Gastrocnemius medialis (tissue), 4 donors: ENCODE measurements at regions of chr6 and their contacts with region 1.

Region 1: GRCh38 chr6:24283043-24283985 is 74.5 kb downstream of the DCDC2 start:
- DNase-seq: peak; percentile 23 to 47
- ATAC-seq: peak; percentile 86 to 93
- H3K4me3 ChIP-seq: peak overlapping the region in 3 of 4 donors; percentile 12 to 33 (median 22)
- H3K27ac ChIP-seq: no peak overlapping the region
- H3K4me1 ChIP-seq: peaks cover 0 to 6% of the 10 kb centered on the region in 2 donors
- H3K27me3 ChIP-seq: no peaks in the 10 kb centered on the region
- CTCF ChIP-seq: peak in 4 of 5 experiments; percentile 35 to 64 (median 52)
- POLR2A ChIP-seq: no peak

Region 2: DNA sequence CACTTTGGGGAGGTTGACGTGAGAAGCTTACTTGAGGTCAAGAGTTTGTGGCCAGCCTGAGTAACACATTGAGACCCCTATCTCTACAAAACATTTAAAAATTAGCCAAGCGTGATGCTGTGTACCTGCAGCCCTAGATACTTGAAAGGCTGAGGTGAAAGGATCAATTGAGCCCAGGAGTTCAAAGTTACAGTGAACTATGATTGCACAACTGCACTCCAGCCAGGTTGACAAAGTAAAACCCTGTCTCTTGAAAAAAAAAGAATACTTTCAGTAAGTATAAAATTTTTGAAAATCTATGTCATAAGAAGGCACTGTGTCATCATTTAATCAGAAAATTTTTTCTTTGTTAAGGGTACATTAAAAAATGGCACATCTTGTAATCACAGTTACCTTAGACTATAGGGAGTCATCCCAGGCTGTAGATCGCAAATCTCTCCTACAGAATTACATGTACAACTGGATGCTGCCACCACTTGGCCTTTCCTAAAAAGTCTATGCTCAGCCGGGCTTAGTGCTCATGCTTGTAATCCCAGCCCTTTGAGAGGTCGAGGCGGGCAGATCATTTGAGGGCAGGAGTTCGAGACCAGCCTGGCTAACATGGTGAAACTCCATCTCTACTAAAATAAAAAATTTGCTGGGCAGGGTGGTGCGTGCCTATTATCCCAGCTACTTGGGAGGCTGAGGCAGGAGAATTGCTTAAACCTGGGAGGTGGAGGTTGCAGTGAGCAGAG is 102.4 kb after region 1 on chr6:
- in situ Hi-C with region 1: loop called (anchors 5 to 25 kb)
- intact Hi-C with region 1: loop called (anchors 1 kb)
- DNase-seq: no peak
- ATAC-seq: no peak
- H3K4me3 ChIP-seq: no peak overlapping the region
- H3K27ac ChIP-seq: no peak overlapping the region
- H3K4me1 ChIP-seq: no peaks in the 10 kb centered on the region
- H3K27me3 ChIP-seq: no peaks in the 10 kb centered on the region
- CTCF ChIP-seq: no peak
- POLR2A ChIP-seq: no peak

Region 3: GRCh38 chr6:24394780-24395437 is 111.6 kb after region 1 on chr6:
- in situ Hi-C with region 1: loop called in 3 of 4 experiments (anchors 5 to 25 kb)
- intact Hi-C with region 1: no loop called
- DNase-seq: peak; percentile 56 to 66
- ATAC-seq: peak; percentile 99
- H3K4me3 ChIP-seq: no peak overlapping the region
- H3K27ac ChIP-seq: peak overlapping the region; percentile 79 to 93 (median 90)
- H3K4me1 ChIP-seq: peaks cover 9 to 13% of the 10 kb centered on the region in 2 donors
- H3K27me3 ChIP-seq: no peaks in the 10 kb centered on the region
- CTCF ChIP-seq: no peak
- POLR2A ChIP-seq: no peak

Region 4: GRCh38 chr6:24520929-24521546 is 237.7 kb after region 1 on chr6:
- in situ Hi-C with region 1: loop called in 1 of 4 experiments (anchors 10 kb)
- intact Hi-C with region 1: loop called (anchors 2 kb)
- DNase-seq: peak; percentile 30 to 39
- ATAC-seq: peak; percentile 74 to 79
- H3K4me3 ChIP-seq: no peak overlapping the region
- H3K27ac ChIP-seq: no peak overlapping the region
- H3K4me1 ChIP-seq: no peaks in the 10 kb centered on the region
- H3K27me3 ChIP-seq: no peaks in the 10 kb centered on the region
- CTCF ChIP-seq: peak in 4 of 5 experiments; percentile 22 to 75 (median 56)
- POLR2A ChIP-seq: no peak

Region 5: GRCh38 chr6:24960991-24961475 is 677.7 kb after region 1 on chr6:
- in situ Hi-C with region 1: no loop called
- intact Hi-C with region 1: no loop called
- DNase-seq: no peak
- ATAC-seq: no peak
- H3K4me3 ChIP-seq: no peak overlapping the region
- H3K27ac ChIP-seq: no peak overlapping the region
- H3K4me1 ChIP-seq: no peaks in the 10 kb centered on the region
- H3K27me3 ChIP-seq: no peaks in the 10 kb centered on the region
- CTCF ChIP-seq: no peak
- POLR2A ChIP-seq: no peak

Region 6: GRCh38 chr6:25147223-25147622 is 863.9 kb after region 1 on chr6:
- in situ Hi-C with region 1: no loop called
- intact Hi-C with region 1: no loop called
- DNase-seq: no peak
- ATAC-seq: no peak
- H3K4me3 ChIP-seq: no peak overlapping the region
- H3K27ac ChIP-seq: no peak overlapping the region
- H3K4me1 ChIP-seq: no peaks in the 10 kb centered on the region
- H3K27me3 ChIP-seq: no peaks in the 10 kb centered on the region
- CTCF ChIP-seq: no peak
- POLR2A ChIP-seq: no peak